WTC11 (cell line): ENCODE measurements at regions of chr14 and their contacts with region 1.

Region 1: DNA sequence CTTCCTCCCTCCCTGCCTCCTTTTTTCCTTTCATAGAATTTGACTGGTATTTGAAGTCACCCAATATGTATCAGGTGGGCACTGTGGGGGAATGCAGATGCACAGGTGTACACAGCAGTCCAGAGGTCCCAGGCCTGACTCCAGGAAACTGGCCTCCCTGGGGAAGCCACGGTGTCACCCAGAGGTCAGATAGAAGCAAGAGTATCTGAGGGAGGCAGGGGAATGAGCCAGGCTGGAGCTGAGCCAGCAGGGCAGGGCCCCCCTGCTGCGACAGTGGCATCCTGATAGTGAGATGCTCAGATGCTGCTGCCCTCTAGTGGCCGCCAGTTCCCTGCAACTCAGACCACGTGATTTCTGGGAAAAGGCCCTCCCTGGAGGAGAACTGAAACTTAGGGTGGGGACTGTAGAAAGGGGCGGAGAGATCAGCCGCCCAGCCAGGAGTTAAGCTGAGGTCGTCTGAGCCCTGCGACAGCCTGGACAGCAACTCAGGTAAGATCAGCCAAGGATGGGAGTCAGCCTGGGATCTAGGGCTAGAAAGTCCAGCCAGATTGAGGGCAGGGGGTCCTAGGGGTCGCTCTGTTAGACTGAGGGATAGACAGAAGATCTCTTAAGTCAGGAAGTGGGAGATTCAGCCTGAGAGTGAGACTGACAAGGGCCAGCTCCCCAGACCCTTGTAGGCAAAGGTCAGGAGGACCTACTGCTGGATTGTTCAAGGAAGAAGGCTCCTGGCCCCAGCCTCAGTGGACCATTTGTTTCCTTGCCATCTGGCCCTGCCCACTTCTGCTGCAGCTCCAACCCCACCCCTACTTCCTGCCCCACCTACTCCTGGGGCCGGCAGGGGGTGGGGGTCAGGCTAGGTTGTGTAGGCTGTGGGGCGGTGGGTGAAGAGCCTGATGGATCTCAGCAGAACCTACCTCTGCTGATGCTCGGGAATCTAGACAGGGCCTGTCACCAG is at the start of gene IRF9:
- DNase-seq: peak; percentile 99
- ATAC-seq: peak; percentile 97
- H3K4me3 Mint-ChIP-seq: peak within 1 kb of the TSS; percentile 70
- H3K27ac Mint-ChIP-seq: peak within 1 kb of the TSS; percentile 90
- H3K4me1 Mint-ChIP-seq: peaks cover 13% of the 10 kb centered on the region
- H3K27me3 Mint-ChIP-seq: no peaks in the 10 kb centered on the region
- CTCF ChIP-seq: peak; percentile 91
- total RNA-seq, gene IRF9: 15.6 to 16.2 TPM (median 15.7 TPM) in 3 replicates

Region 2: GRCh38 chr14:24080888-24081738 is 80.0 kb before region 1 on chr14:
- CTCF ChIA-PET with region 1: interaction called, 15 read pairs
- POLR2A ChIA-PET with region 1: no interaction called
- DNase-seq: peak; percentile 69
- ATAC-seq: peak; percentile 76
- H3K4me3 Mint-ChIP-seq: peak overlapping the region; percentile 79
- H3K27ac Mint-ChIP-seq: peak overlapping the region; percentile 21
- H3K4me1 Mint-ChIP-seq: peaks cover 32% of the 10 kb centered on the region
- H3K27me3 Mint-ChIP-seq: peaks cover 26% of the 10 kb centered on the region
- CTCF ChIP-seq: no peak

Region 3: GRCh38 chr14:24114536-24115450 is 46.3 kb before region 1 on chr14 and contains the starts of genes DCAF11 and NRL:
- CTCF ChIA-PET with region 1: interaction called, 42 read pairs
- POLR2A ChIA-PET with region 1: interaction called, 13 read pairs
- DNase-seq: peak; percentile 98
- ATAC-seq: peak; percentile 86
- H3K4me3 Mint-ChIP-seq: peak within 1 kb of the TSS; percentile 99
- H3K27ac Mint-ChIP-seq: peak within 1 kb of the TSS; percentile 99
- H3K4me1 Mint-ChIP-seq: peaks cover 17% of the 10 kb centered on the region
- H3K27me3 Mint-ChIP-seq: peaks cover 4% of the 10 kb centered on the region; the same call in 1 of the 2 replicates
- CTCF ChIP-seq: no peak
- total RNA-seq, gene DCAF11: 73.6 to 90.2 TPM (median 77.3 TPM) in 3 replicates
- total RNA-seq, gene NRL: 1.3 to 2.3 TPM (median 1.6 TPM) in 3 replicates

Region 4: DNA sequence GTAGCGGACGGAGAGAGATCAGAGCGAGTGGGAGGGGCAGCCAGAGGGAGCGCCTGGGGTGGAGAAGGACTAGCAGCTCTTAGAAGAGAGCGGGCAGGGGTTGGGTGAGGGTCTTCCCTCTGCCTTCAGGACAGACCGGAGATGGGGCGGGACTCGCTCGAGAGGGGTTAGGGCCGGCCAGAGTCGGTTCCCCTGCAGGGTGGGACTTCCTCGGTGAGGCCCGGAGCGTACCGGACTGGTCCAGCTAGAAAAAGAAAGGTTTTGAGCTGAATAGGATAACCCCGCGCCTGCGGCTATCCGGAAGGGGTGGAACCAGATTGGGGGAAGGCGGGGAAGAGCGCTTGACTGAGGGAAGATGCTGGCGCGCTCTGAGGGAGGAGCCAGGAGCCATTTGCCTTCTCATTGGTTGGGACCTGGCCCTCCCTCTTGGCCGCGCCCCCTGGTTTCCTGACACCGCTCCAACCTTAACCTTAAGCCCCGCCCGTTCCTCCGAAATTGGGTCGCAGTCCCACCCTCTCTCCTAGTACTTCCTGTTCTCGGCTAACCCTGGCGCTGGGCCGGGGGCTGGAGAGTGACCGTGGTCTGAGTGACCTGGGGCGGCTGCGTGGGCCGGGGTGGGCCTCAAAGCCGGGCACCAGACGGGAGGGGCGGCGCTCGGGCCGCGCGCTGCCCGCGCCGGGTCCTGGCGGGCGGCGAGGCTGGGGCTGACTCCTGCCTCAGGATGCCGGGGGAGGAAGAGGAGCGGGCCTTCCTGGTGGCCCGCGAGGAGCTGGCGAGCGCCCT is 14.0 kb before region 1 on chr14 and contains the start of gene RNF31:
- CTCF ChIA-PET with region 1: interaction called, 55 read pairs
- POLR2A ChIA-PET with region 1: interaction called, 10 read pairs
- DNase-seq: peak; percentile 98
- ATAC-seq: peak; percentile 89
- H3K4me3 Mint-ChIP-seq: peak within 1 kb of the TSS; percentile 99
- H3K27ac Mint-ChIP-seq: peak within 1 kb of the TSS; percentile 98
- H3K4me1 Mint-ChIP-seq: peaks cover 21% of the 10 kb centered on the region
- H3K27me3 Mint-ChIP-seq: no peaks in the 10 kb centered on the region
- CTCF ChIP-seq: no peak
- total RNA-seq, gene RNF31: 63.0 to 86.2 TPM (median 68.4 TPM) in 3 replicates

Region 5: DNA sequence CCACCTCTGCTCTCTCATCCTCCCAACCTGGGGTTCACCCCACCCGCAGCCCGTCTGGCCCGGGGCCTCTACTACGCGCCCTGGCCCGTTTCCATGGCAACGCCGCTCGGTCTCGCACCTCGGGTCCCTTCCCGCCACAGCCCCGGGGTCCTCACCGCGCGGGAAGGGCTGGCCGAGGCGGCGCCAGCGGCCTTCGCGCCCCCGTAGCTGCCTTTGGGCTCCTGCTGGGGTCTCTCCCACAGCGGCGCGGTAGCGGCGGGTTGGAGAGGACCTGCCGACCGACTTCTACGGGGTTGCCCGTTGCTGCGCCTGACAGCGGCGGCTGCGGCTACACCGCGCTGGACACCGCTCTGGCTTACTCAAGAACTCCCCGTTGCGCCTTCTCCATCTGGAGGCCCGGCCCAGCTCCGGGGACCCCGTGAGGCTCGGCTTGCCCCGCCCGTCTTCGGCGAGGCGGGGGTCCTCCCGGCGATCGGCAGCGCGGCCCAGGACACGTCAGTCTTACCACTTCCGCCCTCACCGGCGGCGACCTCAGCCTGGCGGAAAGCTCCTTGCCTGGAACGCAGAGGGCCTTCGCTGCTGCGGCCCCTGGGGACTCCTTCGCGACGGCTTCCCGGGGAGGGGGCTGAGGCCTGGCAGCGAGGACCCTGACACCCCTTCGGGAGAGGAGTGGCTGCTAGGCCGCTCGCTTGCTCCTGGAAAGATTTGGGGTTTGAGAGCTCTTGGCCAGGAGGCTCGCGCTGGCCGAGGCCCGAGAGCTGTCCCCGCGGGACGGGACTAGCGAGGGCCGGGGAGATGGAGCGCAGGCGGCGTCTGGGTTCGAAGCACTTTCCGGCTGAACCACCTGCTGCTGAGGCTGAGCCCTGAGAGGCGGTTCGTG is 34.3 kb after region 1 on chr14 and contains the start of gene TM9SF1:
- CTCF ChIA-PET with region 1: interaction called, 16 read pairs
- POLR2A ChIA-PET with region 1: interaction called, 7 read pairs
- DNase-seq: peak; percentile 84
- ATAC-seq: peak; percentile 86
- H3K4me3 Mint-ChIP-seq: peak within 1 kb of the TSS; percentile 94
- H3K27ac Mint-ChIP-seq: peak within 1 kb of the TSS; percentile 97
- H3K4me1 Mint-ChIP-seq: peaks cover 23% of the 10 kb centered on the region
- H3K27me3 Mint-ChIP-seq: no peaks in the 10 kb centered on the region
- CTCF ChIP-seq: no peak
- total RNA-seq, gene TM9SF1: 27.9 to 29.2 TPM (median 28.4 TPM) in 3 replicates

Region 6: DNA sequence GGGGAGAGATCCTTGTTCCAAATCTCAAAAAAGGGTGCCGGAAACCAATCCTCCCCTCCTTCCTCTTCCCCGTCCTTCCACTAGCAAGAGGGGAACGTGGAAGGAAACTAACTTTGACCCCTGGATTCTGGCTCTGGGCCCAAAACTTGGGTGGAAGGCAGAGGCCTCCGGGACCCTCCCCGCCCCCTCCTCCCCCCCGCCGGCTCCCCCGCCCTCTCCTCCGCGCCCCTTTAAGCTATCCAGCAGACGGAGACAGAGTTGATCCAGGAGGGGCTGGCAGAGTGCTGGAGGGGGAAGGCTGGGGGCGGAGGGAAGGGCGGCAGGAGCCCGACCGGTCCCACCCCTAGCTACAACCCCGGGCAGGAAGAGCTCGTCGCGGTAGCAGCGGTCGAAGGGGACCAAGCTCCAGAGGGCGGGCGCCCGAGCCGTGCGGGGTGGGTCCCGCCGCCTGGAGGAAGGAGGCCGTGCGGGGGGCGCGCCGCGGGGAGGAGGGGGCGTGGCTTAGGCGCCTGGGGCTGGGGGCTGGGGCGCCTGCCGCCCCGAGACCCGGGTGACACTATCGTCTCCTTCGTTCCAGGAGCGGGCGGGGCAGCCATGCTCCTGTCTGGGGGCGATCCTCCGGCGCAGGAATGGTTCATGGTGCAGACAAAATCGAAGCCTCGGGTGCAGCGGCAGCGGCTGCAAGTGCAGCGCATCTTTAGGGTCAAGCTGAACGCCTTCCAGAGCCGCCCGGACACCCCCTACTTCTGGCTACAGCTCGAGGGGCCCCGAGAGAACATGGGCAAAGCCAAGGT is 237.7 kb after region 1 on chr14 and contains the start of gene NYNRIN:
- CTCF ChIA-PET with region 1: no interaction called
- POLR2A ChIA-PET with region 1: no interaction called
- DNase-seq: peak; percentile 70
- ATAC-seq: peak; percentile 83
- H3K4me3 Mint-ChIP-seq: peak within 1 kb of the TSS; percentile 83
- H3K27ac Mint-ChIP-seq: no peak within 1 kb of the TSS
- H3K4me1 Mint-ChIP-seq: peaks cover 53% of the 10 kb centered on the region
- H3K27me3 Mint-ChIP-seq: peaks cover 14% of the 10 kb centered on the region
- CTCF ChIP-seq: no peak
- total RNA-seq, gene NYNRIN: 16.6 to 18.3 TPM (median 17.9 TPM) in 3 replicates

Region 7: GRCh38 chr14:24442273-24443052 is 281.3 kb after region 1 on chr14 and contains the start of gene SDR39U1:
- CTCF ChIA-PET with region 1: no interaction called
- POLR2A ChIA-PET with region 1: no interaction called
- DNase-seq: peak; percentile 93
- ATAC-seq: peak; percentile 92
- H3K4me3 Mint-ChIP-seq: peak within 1 kb of the TSS; percentile 88
- H3K27ac Mint-ChIP-seq: peak within 1 kb of the TSS; percentile 99
- H3K4me1 Mint-ChIP-seq: peaks cover 10% of the 10 kb centered on the region
- H3K27me3 Mint-ChIP-seq: no peaks in the 10 kb centered on the region
- CTCF ChIP-seq: no peak
- total RNA-seq, gene SDR39U1: 55.0 to 59.2 TPM (median 56.7 TPM) in 3 replicates